Esophagus muscularis mucosa (tissue), 4 donors: ENCODE measurements at regions of chr3 and their contacts with region 1.

Region 1: DNA sequence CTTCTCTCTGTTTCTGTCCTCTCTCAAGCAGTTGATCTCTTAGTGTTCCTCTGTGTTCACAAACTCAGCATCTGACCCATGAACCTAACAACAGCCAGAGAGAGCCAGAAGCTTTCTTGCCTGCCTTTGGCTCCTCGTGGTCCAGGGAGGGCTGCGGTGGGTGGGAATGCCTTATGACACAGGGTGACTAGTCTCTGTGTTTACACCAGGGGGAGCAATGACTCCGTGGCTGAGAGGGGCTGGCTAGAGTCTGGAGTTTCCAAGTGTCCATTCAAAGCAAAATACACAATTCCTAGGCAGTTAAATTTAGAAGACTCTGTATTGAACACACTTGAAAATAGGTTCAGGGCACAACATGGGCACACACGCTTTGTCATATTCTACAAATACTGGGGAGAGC is 370.0 kb upstream of the FRG2C start:
- DNase-seq: peak; percentile 89
- H3K4me3 ChIP-seq: no peak overlapping the region
- H3K27ac ChIP-seq: no peak overlapping the region
- H3K4me1 ChIP-seq: peaks cover 0 to 7% (median 2%) of the 10 kb centered on the region in 4 donors
- H3K27me3 ChIP-seq: no peaks in the 10 kb centered on the region
- CTCF ChIP-seq: peak; percentile 73 to 78 (median 75)
- EP300 ChIP-seq: no peak
- POLR2A ChIP-seq: no peak

Region 2: DNA sequence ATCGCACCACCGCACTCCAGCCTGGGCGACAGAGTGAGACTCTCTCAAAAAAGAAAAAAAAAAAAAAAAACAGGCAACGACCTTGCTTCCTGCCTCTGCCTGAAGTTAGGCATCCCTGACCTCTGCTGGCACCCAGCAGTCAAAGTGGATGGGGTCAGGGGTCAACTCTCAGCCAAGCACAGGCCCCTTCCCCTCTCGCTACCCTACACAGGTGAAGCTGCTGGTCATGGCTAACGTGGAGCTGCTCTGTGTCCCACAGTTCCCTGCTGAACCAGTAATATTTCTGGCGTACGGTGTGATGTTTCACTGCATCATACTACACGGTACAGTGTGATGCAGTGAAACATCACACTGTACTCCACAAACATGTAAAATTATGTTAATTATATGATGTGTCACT is 356.1 kb after region 1 on chr3:
- intact Hi-C with region 1: loop called (anchors 10 kb)
- DNase-seq: peak; percentile 66
- H3K4me3 ChIP-seq: no peak overlapping the region
- H3K27ac ChIP-seq: no peak overlapping the region
- H3K4me1 ChIP-seq: peaks cover 0 to under 1% (median under 1%) of the 10 kb centered on the region in 4 donors
- H3K27me3 ChIP-seq: peaks cover 0 to 18% (median 4%) of the 10 kb centered on the region in 4 donors
- CTCF ChIP-seq: no peak
- EP300 ChIP-seq: no peak
- POLR2A ChIP-seq: no peak